Ascending aorta (tissue), 2 donors: ENCODE measurements at regions of chr20 and their contacts with region 1.

Region 1: GRCh38 chr20:47379433-47380150 is 23.1 kb upstream of the ZMYND8 start:
- DNase-seq: no peak
- H3K4me3 ChIP-seq: no peak overlapping the region
- H3K27ac ChIP-seq: no peak overlapping the region
- H3K4me1 ChIP-seq: peaks cover under 1 to 10% of the 10 kb centered on the region in 2 donors
- H3K27me3 ChIP-seq: no peaks in the 10 kb centered on the region
- CTCF ChIP-seq: no peak

Region 2: GRCh38 chr20:47196091-47197081 is 183.2 kb before region 1 on chr20:
- intact Hi-C with region 1: loop called (anchors 1 kb)
- DNase-seq: peak; percentile 14 to 81
- H3K4me3 ChIP-seq: peak overlapping the region in 1 of 2 donors; percentile 33
- H3K27ac ChIP-seq: no peak overlapping the region
- H3K4me1 ChIP-seq: peaks cover 0 to 5% of the 10 kb centered on the region in 2 donors
- H3K27me3 ChIP-seq: no peaks in the 10 kb centered on the region
- CTCF ChIP-seq: peak; percentile 95 to 98 (median 96)

Region 3: DNA sequence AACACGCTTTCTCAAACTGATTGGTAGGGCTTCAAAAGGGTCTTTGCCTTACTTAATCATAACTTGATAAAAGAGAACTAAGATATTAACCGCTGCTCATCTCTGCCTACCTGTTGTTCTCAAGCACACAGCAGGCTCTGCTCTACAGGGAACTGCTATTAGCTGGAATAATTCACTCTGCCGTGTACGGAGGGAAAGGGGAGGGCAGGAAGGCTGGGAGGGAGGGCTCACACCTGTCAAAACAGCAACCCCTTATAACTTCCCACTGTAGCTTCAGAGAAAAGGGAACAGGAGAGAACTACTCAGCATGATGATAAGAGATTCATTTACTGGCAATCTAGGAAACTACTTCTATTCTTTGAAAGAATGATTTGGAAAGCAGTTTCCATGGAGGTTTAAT is 98.2 kb before region 1 on chr20:
- intact Hi-C with region 1: no loop called
- DNase-seq: peak in 1 of 2 donors; percentile 28
- H3K4me3 ChIP-seq: no peak overlapping the region
- H3K27ac ChIP-seq: no peak overlapping the region
- H3K4me1 ChIP-seq: peaks cover 0 to 15% of the 10 kb centered on the region in 2 donors
- H3K27me3 ChIP-seq: no peaks in the 10 kb centered on the region
- CTCF ChIP-seq: no peak

Region 4: DNA sequence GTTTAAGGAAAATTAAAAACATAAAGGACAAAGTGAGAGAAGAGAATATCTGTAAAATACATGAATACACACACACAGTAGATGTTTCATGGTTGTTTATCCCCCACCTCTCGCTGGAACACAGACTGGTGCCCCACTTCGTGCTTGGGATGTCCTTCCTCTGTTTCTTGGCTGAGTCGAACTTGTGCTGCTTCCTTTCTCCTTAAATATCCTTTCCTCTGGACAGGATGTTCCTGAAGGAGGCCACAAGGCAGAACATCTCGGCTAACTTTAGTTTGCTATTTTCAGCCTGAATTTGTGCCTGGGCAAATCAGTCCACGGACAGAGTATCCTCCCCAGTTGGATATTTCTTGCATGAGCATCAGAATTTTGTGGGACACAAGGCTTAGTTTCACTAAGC is 31.6 kb after region 1 on chr20:
- intact Hi-C with region 1: no loop called
- DNase-seq: no peak
- H3K4me3 ChIP-seq: no peak overlapping the region
- H3K27ac ChIP-seq: peak overlapping the region; percentile 12 to 27
- H3K4me1 ChIP-seq: peaks cover 0 to 5% of the 10 kb centered on the region in 2 donors
- H3K27me3 ChIP-seq: no peaks in the 10 kb centered on the region
- CTCF ChIP-seq: no peak

Region 5: GRCh38 chr20:47464380-47465101 is 84.9 kb after region 1 on chr20:
- intact Hi-C with region 1: loop called (anchors 1 kb)
- DNase-seq: peak; percentile 33 to 93
- H3K4me3 ChIP-seq: no peak overlapping the region
- H3K27ac ChIP-seq: peak overlapping the region; percentile 90 to 92
- H3K4me1 ChIP-seq: peaks cover 3 to 26% of the 10 kb centered on the region in 2 donors
- H3K27me3 ChIP-seq: no peaks in the 10 kb centered on the region
- CTCF ChIP-seq: peak; percentile 56 to 63 (median 61)

Region 6: GRCh38 chr20:47665221-47665991 is 285.8 kb after region 1 on chr20:
- intact Hi-C with region 1: no loop called
- DNase-seq: peak in 1 of 2 donors; percentile 56
- H3K4me3 ChIP-seq: no peak overlapping the region
- H3K27ac ChIP-seq: no peak overlapping the region
- H3K4me1 ChIP-seq: peaks cover 0 to 9% of the 10 kb centered on the region in 2 donors
- H3K27me3 ChIP-seq: no peaks in the 10 kb centered on the region
- CTCF ChIP-seq: no peak